ENCODE measurements at regions of chr2 and their contacts with region 1.

Region 1: DNA sequence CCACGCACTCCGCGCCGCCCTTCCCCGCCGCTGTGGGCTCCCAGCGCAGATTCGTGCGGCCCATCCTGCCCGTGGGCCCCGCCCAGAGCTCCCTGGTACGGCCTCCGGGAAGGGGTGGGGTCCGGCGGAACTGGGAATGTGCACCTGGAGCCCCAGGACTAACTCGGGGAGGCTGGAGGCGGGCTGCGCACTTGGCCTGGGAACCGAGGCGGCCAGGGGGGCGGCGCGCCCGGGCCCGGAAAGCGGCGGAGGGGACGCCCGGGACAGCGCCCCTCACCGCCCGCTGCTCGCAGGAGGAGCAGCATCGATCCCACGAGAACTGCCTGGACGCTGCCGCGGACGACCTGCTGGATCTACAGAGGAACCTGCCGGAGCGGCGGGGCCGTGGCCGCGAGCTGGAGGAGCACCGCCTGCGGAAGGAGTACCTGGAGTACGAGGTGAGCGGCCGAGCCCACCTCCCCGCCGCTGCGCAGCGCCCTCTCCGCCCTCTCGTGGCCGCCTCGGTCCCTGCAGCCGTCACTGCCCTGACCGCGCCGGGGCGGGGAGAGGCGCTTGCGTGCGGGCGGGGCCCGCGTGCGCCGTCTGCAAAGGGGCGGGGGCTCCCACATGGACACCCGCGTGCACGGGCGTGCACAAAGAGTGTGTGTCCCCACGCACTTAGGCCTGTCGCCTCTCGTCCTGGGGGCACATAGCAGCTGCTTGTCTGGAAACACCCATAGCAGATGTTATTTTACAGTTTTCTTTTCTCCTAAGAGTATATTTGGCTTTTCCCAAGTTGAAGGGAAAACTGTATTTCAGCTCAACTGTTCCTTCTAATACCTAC is 25.2 kb downstream of the PSD4 start:
- DNase-seq: peak; percentile 58 to 85 (median 76)
- ATAC-seq: peak; percentile 77 to 82
- H3K4me3 Mint-ChIP-seq: peak overlapping the region in 2 of 10 donors; percentile 29 to 36
- H3K27ac Mint-ChIP-seq: peak overlapping the region in 2 of 10 donors; percentile 55 to 57
- H3K4me1 Mint-ChIP-seq: peaks cover 21 to 42% (median 29%) of the 10 kb centered on the region in 4 donors
- H3K27me3 Mint-ChIP-seq: no peaks in the 10 kb centered on the region

Region 2: DNA sequence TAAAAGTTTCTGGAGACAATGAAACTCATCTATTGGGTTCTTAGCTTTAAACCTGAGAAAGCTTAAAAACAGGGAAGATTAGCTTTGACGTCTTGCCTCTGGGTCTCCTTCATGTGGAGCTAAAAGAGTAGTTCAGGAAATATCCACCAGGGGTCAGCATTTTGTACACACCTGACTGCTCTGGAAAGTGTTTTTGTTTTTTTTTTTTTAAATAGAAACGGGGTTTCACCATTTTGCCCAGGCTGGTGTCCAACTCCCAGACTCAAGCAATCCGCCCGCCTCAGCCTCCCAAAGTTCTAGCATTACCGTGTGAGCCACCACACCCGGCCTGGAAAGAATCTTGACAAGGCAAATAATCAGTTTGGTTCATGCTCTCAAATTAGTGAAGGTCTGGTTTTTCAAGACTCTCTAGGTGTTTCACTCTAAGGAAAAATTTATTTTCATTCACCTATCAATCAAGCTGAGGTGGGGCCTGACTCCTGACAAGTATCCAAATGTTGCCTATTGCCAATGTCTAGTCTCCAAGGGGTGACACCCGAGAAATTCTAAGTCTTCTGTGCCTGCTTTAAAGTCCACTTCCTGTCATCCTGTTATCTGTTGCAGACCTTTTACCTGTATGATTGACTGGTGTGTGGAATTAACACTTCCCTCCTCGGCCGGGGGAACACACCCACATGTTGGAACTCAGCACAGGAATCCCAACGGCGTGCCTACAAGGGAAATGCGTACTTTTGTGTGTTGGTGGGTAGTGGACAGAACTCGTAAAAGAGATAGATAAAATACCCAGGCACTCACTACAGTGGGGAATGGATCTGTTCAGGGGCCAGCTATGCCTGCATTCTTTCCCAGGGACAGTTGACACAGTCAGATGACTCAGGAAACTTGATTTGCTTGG is 60.3 kb before region 1 on chr2:
- POLR2A ChIA-PET with region 1: interaction called, 41 read pairs
- DNase-seq: peak in 9 of 10 donors; percentile 33 to 87 (median 72)
- ATAC-seq: peak; percentile 84 to 87
- H3K4me3 Mint-ChIP-seq: peak overlapping the region; percentile 56 to 76 (median 72)
- H3K27ac Mint-ChIP-seq: peak overlapping the region; percentile 20 to 87 (median 78)
- H3K4me1 Mint-ChIP-seq: peaks cover 11 to 26% (median 23%) of the 10 kb centered on the region in 4 donors
- H3K27me3 Mint-ChIP-seq: no peaks in the 10 kb centered on the region

Region 3: DNA sequence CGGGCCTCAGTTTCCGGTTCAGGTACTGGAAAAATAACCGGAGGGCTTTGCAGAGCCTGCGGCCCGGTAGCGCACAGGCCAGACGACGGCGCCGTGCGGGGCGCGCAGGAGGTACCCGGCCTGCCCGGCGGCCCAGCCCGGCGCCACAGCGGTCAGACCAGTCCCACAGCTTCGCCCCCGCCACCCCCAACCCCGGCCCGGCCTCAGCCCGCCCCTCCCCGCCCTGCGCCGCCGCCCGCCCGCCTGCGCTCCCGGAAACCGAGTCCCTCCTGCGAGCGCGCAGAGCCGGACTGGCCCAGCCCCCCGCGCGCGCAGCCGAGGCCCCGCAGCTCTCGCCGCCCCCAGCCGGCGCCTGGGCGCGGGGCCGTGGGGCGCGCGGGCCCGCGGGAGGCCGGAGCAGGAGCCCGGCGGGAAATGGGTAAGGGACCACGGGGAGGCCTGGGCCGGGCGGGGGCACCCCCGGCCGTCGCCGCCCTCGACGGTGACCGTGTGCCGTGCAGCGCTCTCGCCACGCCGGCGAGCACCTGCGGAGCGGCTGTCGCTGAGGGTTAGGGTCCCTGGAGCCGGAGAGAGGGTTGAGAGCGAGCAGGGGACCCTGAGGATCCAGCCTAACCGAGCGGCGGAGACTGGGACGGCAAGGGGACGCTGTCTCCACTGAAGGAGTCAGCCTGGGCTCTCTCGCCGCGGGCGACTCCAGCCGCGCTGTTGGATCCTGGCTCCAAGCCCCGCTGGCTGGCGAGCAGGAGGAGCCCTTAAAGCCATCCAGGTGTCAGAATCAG is 41.7 kb before region 1 on chr2:
- POLR2A ChIA-PET with region 1: interaction called, 33 read pairs
- DNase-seq: peak in 6 of 10 donors; percentile 30 to 59 (median 50)
- ATAC-seq: peak; percentile 87
- H3K4me3 Mint-ChIP-seq: peak overlapping the region; percentile 83 to 93 (median 87)
- H3K27ac Mint-ChIP-seq: peak overlapping the region in 9 of 10 donors; percentile 81 to 96 (median 91)
- H3K4me1 Mint-ChIP-seq: peaks cover 9 to 34% (median 26%) of the 10 kb centered on the region in 4 donors
- H3K27me3 Mint-ChIP-seq: no peaks in the 10 kb centered on the region

Region 4: DNA sequence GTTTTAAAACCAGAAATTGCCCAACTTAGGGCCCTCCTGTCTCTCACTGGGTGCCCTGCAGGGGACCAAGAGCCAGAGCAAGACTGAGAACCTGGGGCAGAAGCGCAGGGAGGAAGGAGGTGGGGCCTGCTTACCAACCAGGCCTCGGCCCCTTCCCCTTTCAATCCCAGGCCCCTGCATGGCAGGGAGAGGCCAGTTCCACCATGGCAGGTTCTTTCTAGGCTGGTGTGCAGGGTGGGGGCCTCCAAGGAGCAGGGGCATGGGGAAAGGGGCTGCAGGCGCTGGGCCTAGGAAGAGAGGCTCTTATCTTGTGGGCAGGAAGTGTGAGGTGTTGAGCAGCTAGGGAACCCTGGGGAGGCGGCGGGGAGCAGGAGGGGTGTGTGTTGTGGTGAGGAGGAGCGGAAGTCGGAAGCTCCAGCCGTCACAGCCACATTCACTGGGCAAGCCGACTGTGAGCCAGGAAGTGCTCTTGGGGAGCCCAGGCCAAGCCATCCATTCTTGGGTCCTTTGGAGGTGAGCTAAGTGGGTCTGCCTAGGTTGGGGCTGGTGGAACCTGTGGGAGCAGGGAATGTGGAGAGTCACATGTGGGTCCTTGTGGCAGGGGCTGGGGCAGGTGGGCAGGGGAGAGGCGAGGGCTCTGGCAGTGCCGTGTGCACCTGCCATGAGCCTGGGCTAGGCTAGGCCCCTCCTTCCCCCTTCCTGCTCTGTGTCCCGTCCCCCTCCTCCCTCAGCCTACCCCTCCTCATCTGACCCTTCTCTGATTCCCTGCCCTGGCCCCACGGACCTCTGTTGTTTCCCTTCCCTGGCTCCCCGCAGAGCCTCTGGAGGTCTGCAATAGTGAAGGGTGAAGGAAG is 25.2 kb before region 1 on chr2 and contains the start of gene PSD4:
- POLR2A ChIA-PET with region 1: interaction called, 80 read pairs
- DNase-seq: peak; percentile 57 to 93 (median 86)
- ATAC-seq: peak; percentile 79 to 85
- H3K4me3 Mint-ChIP-seq: peak within 1 kb of the TSS; percentile 81 to 96 (median 94)
- H3K27ac Mint-ChIP-seq: peak within 1 kb of the TSS; percentile 84 to 97 (median 94)
- H3K4me1 Mint-ChIP-seq: peaks cover 49 to 84% (median 79%) of the 10 kb centered on the region in 4 donors
- H3K27me3 Mint-ChIP-seq: peaks cover 0 to 2% (median 0%) of the 10 kb centered on the region in 5 donors
- polyA plus RNA-seq, gene PSD4: 22.8 to 44.1 (median 29.9) TPM

Region 5: GRCh38 chr2:113181258-113182051 is 17.5 kb before region 1 on chr2:
- POLR2A ChIA-PET with region 1: interaction called, 80 read pairs
- DNase-seq: peak in 2 of 10 donors; percentile 20 to 32
- ATAC-seq: peak; percentile 41 to 54
- H3K4me3 Mint-ChIP-seq: peak overlapping the region; percentile 61 to 95 (median 78)
- H3K27ac Mint-ChIP-seq: peak overlapping the region; percentile 87 to 97 (median 94)
- H3K4me1 Mint-ChIP-seq: peaks cover 51 to 98% (median 95%) of the 10 kb centered on the region in 4 donors
- H3K27me3 Mint-ChIP-seq: no peaks in the 10 kb centered on the region